ENCODE measurements at regions of chr1 and their contacts with region 1.

Region 1: GRCh38 chr1:89524369-89525168 is at the start of gene LRRC8B:
- DNase-seq: peak; percentile 89
- H3K4me3 ChIP-seq: peak within 1 kb of the TSS; percentile 65 to 88 (median 74)
- H3K27ac ChIP-seq: peak within 1 kb of the TSS; percentile 62
- H3K4me1 ChIP-seq: peaks cover 24% of the 10 kb centered on the region
- H3K27me3 ChIP-seq: no peaks in the 10 kb centered on the region
- CTCF ChIP-seq: no peak
- POLR2A ChIP-seq: peak; percentile 54
- total RNA-seq, gene LRRC8B: 15.2 and 15.9 TPM in 2 replicates

Region 2: DNA sequence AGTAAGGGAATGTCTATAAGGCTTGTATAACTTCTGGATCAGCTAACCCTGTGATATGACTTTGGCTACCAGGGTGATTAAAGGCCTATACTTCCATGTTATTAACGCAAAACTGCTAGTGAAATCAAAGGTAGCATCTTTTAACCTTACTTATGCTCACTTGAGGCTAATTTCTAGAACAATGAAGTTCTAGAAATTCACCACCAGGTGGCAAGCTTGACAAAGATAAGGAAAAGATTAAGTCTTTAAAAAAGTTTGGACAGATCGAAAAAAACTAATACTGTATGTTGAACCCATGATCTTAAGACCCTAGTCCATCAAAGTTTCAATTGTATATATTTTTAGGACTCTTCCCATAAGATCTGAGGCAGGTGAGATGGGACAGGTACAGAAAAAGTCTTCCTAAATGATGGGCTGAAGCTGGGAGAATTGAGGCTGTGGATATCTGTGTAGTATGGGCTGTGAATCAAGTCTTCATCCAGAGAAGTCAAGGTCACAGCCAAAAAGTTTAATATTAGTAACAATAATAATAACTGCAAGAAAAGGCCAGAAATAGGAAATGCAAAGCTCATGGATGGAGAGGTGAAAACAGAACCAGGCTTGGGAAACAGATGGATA is 550.9 kb before region 1 on chr1:
- CTCF ChIA-PET with region 1: no interaction called
- POLR2A ChIA-PET with region 1: no interaction called
- dilution Hi-C with region 1: no loop called
- intact Hi-C with region 1: no loop called
- DNase-seq: peak; percentile 55
- H3K4me3 ChIP-seq: no peak overlapping the region
- H3K27ac ChIP-seq: no peak overlapping the region
- H3K4me1 ChIP-seq: no peaks in the 10 kb centered on the region
- H3K27me3 ChIP-seq: no peaks in the 10 kb centered on the region
- CTCF ChIP-seq: peak; percentile 34 to 35
- POLR2A ChIP-seq: no peak

Region 3: DNA sequence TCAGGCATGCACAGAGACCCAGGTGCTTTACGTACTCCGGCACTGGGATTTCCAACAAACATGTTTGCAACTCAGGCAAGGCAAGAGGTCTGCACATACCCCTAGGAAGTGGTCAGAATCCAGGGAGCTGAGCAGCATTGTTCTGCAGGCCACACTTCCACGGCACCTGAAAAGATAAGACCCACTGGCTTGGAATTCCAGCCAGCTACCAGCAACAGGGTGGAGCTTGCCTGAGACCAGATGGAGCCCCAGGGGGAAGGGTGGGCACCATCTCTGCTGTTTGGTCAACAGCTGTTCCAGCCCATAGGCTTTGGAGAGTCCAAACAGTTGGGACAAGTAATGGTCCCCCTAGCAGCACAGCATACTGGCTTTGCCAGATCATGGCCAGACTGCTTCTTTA is 51.6 kb before region 1 on chr1:
- CTCF ChIA-PET with region 1: no interaction called
- POLR2A ChIA-PET with region 1: no interaction called
- dilution Hi-C with region 1: no loop called
- intact Hi-C with region 1: no loop called
- DNase-seq: no peak
- H3K4me3 ChIP-seq: no peak overlapping the region
- H3K27ac ChIP-seq: no peak overlapping the region
- H3K4me1 ChIP-seq: no peaks in the 10 kb centered on the region
- H3K27me3 ChIP-seq: peaks cover 4 to 16% of the 10 kb centered on the region in 2 experiments
- CTCF ChIP-seq: no peak
- POLR2A ChIP-seq: no peak

Region 4: GRCh38 chr1:89538361-89538760 is 13.8 kb after region 1 on chr1:
- CTCF ChIA-PET with region 1: interaction called, 4 read pairs
- POLR2A ChIA-PET with region 1: no interaction called
- dilution Hi-C with region 1: no loop called
- intact Hi-C with region 1: loop called (anchors 1 kb)
- DNase-seq: peak; percentile 65
- H3K4me3 ChIP-seq: no peak overlapping the region
- H3K27ac ChIP-seq: peak overlapping the region; percentile 80
- H3K4me1 ChIP-seq: peaks cover 31% of the 10 kb centered on the region
- H3K27me3 ChIP-seq: no peaks in the 10 kb centered on the region
- CTCF ChIP-seq: no peak
- POLR2A ChIP-seq: peak; percentile 28

Region 5: GRCh38 chr1:89598450-89599331 is 74.1 kb after region 1 on chr1:
- CTCF ChIA-PET with region 1: interaction called, 37 read pairs
- POLR2A ChIA-PET with region 1: no interaction called
- dilution Hi-C with region 1: no loop called
- intact Hi-C with region 1: loop called (anchors 1 kb)
- DNase-seq: peak; percentile 68
- H3K4me3 ChIP-seq: no peak overlapping the region
- H3K27ac ChIP-seq: no peak overlapping the region
- H3K4me1 ChIP-seq: peaks cover 1% of the 10 kb centered on the region
- H3K27me3 ChIP-seq: no peaks in the 10 kb centered on the region
- CTCF ChIP-seq: peak; percentile 33 to 48
- POLR2A ChIP-seq: no peak

Region 6: DNA sequence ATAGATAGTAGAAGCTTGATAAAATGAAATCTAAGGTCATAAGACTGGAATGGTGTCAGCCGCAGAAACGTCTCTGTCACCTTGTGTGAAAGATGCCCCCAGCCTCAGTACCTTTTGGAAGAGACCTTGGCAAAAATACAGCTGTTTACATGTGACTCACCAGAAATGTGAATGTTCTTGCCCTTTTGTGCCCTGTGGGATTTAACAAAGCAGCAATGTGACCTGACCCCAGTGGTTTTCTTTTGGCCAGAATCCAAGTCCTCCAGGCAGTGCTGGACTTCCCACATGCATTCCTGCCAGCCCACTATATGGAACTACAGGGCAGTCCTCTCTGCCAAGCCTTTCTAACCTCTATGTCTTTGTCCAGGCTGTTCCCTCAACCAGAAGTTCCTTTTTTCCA is 81.1 kb after region 1 on chr1:
- CTCF ChIA-PET with region 1: interaction called, 37 read pairs
- POLR2A ChIA-PET with region 1: no interaction called
- dilution Hi-C with region 1: no loop called
- intact Hi-C with region 1: no loop called
- DNase-seq: peak; percentile 82
- H3K4me3 ChIP-seq: no peak overlapping the region
- H3K27ac ChIP-seq: no peak overlapping the region
- H3K4me1 ChIP-seq: peaks cover 14% of the 10 kb centered on the region
- H3K27me3 ChIP-seq: no peaks in the 10 kb centered on the region
- CTCF ChIP-seq: no peak
- POLR2A ChIP-seq: no peak

Region 7: GRCh38 chr1:89994805-89995597 is 470.4 kb after region 1 on chr1 and contains the start of gene ZNF326:
- CTCF ChIA-PET with region 1: no interaction called
- POLR2A ChIA-PET with region 1: no interaction called
- dilution Hi-C with region 1: no loop called
- intact Hi-C with region 1: loop called (anchors 5 kb)
- DNase-seq: peak; percentile 98
- H3K4me3 ChIP-seq: peak within 1 kb of the TSS; percentile 89 to 99 (median 98)
- H3K27ac ChIP-seq: peak within 1 kb of the TSS; percentile 94
- H3K4me1 ChIP-seq: peaks cover 19% of the 10 kb centered on the region
- H3K27me3 ChIP-seq: no peaks in the 10 kb centered on the region
- CTCF ChIP-seq: no peak
- POLR2A ChIP-seq: peak; percentile 98
- total RNA-seq, gene ZNF326: 29.7 and 29.9 TPM in 2 replicates